GM12878 (cell line): ENCODE measurements at regions of chr12 and their contacts with region 1.

Region 1: GRCh38 chr12:94813314-94813713 is 163.0 kb upstream of the TMCC3 start:
- DNase-seq: no peak
- ATAC-seq: no peak
- H3K4me3 ChIP-seq: peak overlapping the region; percentile 0; the same call in 1 of the 2 replicates
- H3K27ac ChIP-seq: peak overlapping the region; percentile 13; the same call in 1 of the 2 replicates
- H3K4me1 ChIP-seq: peaks cover 29% of the 10 kb centered on the region
- H3K27me3 ChIP-seq: no peaks in the 10 kb centered on the region
- CTCF ChIP-seq: no peak
- EP300 ChIP-seq: 0 out of 4 replicates have a peak, but pooled peaks of 1 of the 2 experiments have one; percentile 15
- POLR2A ChIP-seq: no peak
- RAD21 ChIP-seq: no peak

Region 2: DNA sequence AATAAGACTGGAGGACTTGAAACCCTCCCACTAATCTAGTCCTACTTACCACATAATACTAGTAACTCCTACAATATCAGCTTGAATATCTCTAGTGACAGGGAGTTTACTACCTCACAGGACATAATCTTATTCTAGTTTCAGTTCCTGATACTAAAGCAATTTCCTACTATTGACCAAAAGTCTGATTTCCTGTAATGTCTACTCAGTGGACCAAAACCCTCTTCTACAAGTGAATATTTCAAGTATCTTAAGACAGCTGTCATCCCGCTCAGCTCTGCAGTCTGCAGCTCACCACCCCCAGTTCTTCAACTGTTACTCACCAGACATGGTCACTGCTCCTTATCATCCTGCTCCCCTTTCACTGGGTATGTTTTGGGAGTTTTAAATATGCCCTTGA is 92.1 kb before region 1 on chr12:
- CTCF ChIA-PET with region 1: interaction called, 3 read pairs
- POLR2A ChIA-PET with region 1: interaction called, 3 read pairs
- RAD21 ChIA-PET with region 1: interaction called, 13 read pairs
- SMC1A ChIA-PET with region 1: interaction called, 5 read pairs
- in situ Hi-C with region 1: no loop called
- intact Hi-C with region 1: loop called (anchors 5 kb)
- DNase-seq: peak; percentile 75
- ATAC-seq: peak; percentile 92
- H3K4me3 ChIP-seq: 0 out of 2 replicates have a peak overlapping the region, but pooled peaks have one; percentile 8
- H3K27ac ChIP-seq: peak overlapping the region; percentile 63
- H3K4me1 ChIP-seq: peaks cover 24% of the 10 kb centered on the region
- H3K27me3 ChIP-seq: no peaks in the 10 kb centered on the region
- CTCF ChIP-seq: no peak
- EP300 ChIP-seq: 0 out of 4 replicates have a peak, but pooled peaks of 1 of the 2 experiments have one; percentile 34
- POLR2A ChIP-seq: no peak
- RAD21 ChIP-seq: no peak

Region 3: GRCh38 chr12:94762259-94762942 is 50.9 kb before region 1 on chr12:
- CTCF ChIA-PET with region 1: interaction called, 5 read pairs
- POLR2A ChIA-PET with region 1: interaction called, 28 read pairs
- RAD21 ChIA-PET with region 1: interaction called, 18 read pairs
- SMC1A ChIA-PET with region 1: interaction called, 17 read pairs
- in situ Hi-C with region 1: no loop called
- intact Hi-C with region 1: no loop called
- DNase-seq: peak; percentile 56
- ATAC-seq: peak; percentile 85
- H3K4me3 ChIP-seq: no peak overlapping the region
- H3K27ac ChIP-seq: peak overlapping the region; percentile 35
- H3K4me1 ChIP-seq: peaks cover 30% of the 10 kb centered on the region
- H3K27me3 ChIP-seq: no peaks in the 10 kb centered on the region
- CTCF ChIP-seq: no peak
- EP300 ChIP-seq: peak in 1 of 2 experiments; percentile 46; a peak in 1 of 4 replicates
- POLR2A ChIP-seq: no peak
- RAD21 ChIP-seq: no peak

Region 4: GRCh38 chr12:94769047-94769420 is 44.3 kb before region 1 on chr12:
- CTCF ChIA-PET with region 1: interaction called, 8 read pairs
- POLR2A ChIA-PET with region 1: interaction called, 28 read pairs
- RAD21 ChIA-PET with region 1: interaction called, 47 read pairs
- SMC1A ChIA-PET with region 1: interaction called, 28 read pairs
- in situ Hi-C with region 1: no loop called
- intact Hi-C with region 1: loop called (anchors 2 kb)
- DNase-seq: peak; percentile 53
- ATAC-seq: peak; percentile 91
- H3K4me3 ChIP-seq: peak overlapping the region; percentile 55; the same call in 1 of the 2 replicates
- H3K27ac ChIP-seq: peak overlapping the region; percentile 78
- H3K4me1 ChIP-seq: peaks cover 37% of the 10 kb centered on the region
- H3K27me3 ChIP-seq: no peaks in the 10 kb centered on the region
- CTCF ChIP-seq: no peak
- EP300 ChIP-seq: no peak
- POLR2A ChIP-seq: peak; percentile 26; the same call in 1 of the 2 replicates
- RAD21 ChIP-seq: no peak

Region 5: DNA sequence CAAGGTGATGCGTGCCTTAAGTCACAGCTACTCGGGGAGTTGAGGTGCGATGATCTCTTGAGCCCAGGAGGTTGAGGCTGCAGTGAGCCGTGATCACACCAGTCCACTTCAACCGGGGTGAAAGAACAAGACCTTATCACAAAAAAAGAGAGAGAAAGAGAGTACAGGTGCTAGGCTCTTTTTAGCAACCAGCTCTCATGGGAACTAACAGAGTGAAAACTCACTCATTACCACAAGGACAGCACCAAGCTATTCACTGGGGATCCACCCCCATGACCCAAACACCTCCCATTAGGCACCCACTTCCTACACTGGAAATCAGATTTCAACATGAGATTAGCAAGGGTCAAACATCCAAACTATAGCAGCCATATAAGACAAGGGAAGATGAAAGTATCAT is 26.0 kb after region 1 on chr12:
- CTCF ChIA-PET with region 1: interaction called, 8 read pairs
- POLR2A ChIA-PET with region 1: interaction called, 12 read pairs
- RAD21 ChIA-PET with region 1: interaction called, 23 read pairs
- SMC1A ChIA-PET with region 1: interaction called, 99 read pairs
- in situ Hi-C with region 1: no loop called
- intact Hi-C with region 1: no loop called
- DNase-seq: peak; percentile 82
- ATAC-seq: peak; percentile 83
- H3K4me3 ChIP-seq: no peak overlapping the region
- H3K27ac ChIP-seq: peak overlapping the region; percentile 79
- H3K4me1 ChIP-seq: peaks cover 26% of the 10 kb centered on the region
- H3K27me3 ChIP-seq: no peaks in the 10 kb centered on the region
- CTCF ChIP-seq: no peak
- EP300 ChIP-seq: peak; percentile 52 to 75; a peak in 2 of 4 replicates
- POLR2A ChIP-seq: no peak
- RAD21 ChIP-seq: no peak

Region 6: DNA sequence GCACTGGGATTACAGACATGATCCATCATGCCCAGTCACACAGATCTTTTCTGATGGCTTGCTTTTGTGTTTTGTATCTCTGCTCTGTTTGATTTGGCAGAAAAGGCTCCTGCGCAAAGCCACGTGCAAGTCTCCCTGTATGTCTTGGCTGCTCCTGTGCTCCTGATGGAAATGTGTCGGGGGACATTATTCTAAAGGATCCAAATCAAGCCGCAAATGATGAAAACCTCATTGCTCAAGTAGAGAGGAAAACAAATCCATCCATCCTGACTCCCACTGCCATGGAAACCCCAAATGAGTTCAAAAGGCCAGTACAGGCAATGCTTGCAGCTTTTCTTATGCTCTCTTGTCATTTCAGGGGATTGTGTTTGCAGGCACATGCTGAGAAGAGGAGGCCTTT is 96.3 kb after region 1 on chr12:
- CTCF ChIA-PET with region 1: no interaction called
- POLR2A ChIA-PET with region 1: no interaction called
- RAD21 ChIA-PET with region 1: no interaction called
- SMC1A ChIA-PET with region 1: no interaction called
- in situ Hi-C with region 1: no loop called
- intact Hi-C with region 1: no loop called
- DNase-seq: no peak
- ATAC-seq: no peak
- H3K4me3 ChIP-seq: no peak overlapping the region
- H3K27ac ChIP-seq: no peak overlapping the region
- H3K4me1 ChIP-seq: no peaks in the 10 kb centered on the region
- H3K27me3 ChIP-seq: no peaks in the 10 kb centered on the region; a peak in 1 of 4 replicates
- CTCF ChIP-seq: no peak
- EP300 ChIP-seq: no peak
- POLR2A ChIP-seq: no peak
- RAD21 ChIP-seq: no peak

Region 7: DNA sequence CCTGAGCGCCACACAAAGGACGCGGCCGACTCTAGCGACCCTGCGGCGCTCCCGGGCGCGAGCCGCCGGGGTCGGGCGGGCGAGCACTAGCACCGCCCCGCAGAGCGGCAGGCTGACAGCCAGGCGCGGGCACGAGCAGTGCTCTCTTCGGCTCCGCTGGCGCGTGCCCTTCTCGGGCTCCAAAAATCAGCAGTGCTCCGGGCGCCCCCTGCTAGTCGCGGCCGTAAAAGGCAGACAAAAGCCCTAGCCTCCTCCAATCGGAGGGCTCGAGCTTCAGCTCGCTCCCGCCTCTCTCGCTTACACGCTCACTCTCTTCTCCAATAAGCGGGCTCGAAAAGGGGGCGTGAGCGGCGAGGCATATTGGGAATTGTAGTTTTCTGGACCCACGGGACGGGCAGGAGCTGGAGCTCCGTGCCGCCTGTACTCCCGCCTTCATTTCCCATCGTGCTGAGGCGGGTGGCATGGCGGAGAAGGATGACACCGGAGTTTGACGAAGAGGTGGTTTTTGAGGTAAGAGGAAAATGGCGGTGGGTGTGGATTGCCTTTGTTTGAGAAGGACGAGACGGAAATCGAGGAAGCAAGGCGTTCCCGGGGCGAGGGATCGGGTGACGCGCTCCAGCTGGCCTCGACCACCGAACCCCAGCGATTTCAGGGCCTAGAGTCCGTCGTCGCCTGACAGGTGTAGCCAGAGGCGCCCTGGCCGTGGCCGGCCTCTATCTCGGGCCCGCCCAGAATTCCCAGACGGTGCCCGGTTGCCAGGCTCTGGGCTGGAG is 404.2 kb after region 1 on chr12 and contains the starts of genes FGD6 and VEZT:
- CTCF ChIA-PET with region 1: no interaction called
- POLR2A ChIA-PET with region 1: no interaction called
- RAD21 ChIA-PET with region 1: no interaction called
- SMC1A ChIA-PET with region 1: no interaction called
- in situ Hi-C with region 1: no loop called
- intact Hi-C with region 1: no loop called
- DNase-seq: peak; percentile 98
- ATAC-seq: peak; percentile 91
- H3K4me3 ChIP-seq: peak within 1 kb of the TSS; percentile 98
- H3K27ac ChIP-seq: peak within 1 kb of the TSS; percentile 86
- H3K4me1 ChIP-seq: no peaks in the 10 kb centered on the region
- H3K27me3 ChIP-seq: no peaks in the 10 kb centered on the region
- CTCF ChIP-seq: peak; percentile 52 to 73 (median 53); a peak in 5 of 6 replicates
- EP300 ChIP-seq: no peak
- POLR2A ChIP-seq: peak; percentile 89
- RAD21 ChIP-seq: peak; percentile 70
- polyA plus RNA-seq, gene FGD6: 2.4 to 3.3 TPM
- polyA plus RNA-seq, gene VEZT: 32.8 to 35.6 TPM